ENCODE measurements at regions of chr5 and their contacts with region 1.

Region 1: DNA sequence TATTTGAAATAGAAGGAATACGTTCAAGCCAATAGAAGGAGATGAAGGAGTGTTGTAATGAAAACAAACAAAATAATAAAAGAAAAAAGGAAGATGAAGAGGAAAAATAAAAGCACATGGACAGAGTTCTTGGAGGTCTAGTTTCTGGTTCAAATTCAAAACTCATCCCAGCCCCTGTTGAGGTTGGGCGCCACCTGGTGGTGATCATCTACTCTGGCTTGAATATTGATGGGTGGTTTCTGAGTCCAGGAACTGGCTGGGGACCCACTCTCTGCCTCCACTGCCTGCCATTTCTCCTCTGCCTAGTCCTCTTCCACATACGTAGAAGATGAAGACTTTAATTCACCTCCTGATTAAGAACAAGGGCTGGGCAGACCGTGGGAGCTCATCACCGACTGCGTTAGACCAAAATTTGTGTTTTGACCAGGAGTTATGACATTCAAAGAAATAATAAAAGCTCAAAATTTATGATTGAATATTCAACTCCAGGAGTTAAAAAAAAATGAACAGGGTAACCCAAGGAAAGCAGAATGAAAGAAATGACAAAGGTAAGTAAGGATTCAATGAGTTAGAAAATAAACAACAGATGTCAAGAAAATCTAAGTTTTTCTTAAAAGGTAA is 99.0 kb upstream of the SLC1A3 start:
- DNase-seq: peak; percentile 69
- ATAC-seq: peak; percentile 51
- H3K4me3 ChIP-seq: no peak overlapping the region
- H3K4me3 Mint-ChIP-seq: no peak overlapping the region
- H3K27ac ChIP-seq: no peak overlapping the region
- H3K27ac Mint-ChIP-seq: no peak overlapping the region
- H3K4me1 ChIP-seq: no peaks in the 10 kb centered on the region
- H3K4me1 Mint-ChIP-seq: no peaks in the 10 kb centered on the region
- H3K27me3 ChIP-seq: peaks cover 0 to 2% (median 0%) of the 10 kb centered on the region in 4 experiments
- H3K27me3 Mint-ChIP-seq: peaks cover 25% of the 10 kb centered on the region
- CTCF ChIP-seq: peak; percentile 87

Region 2: GRCh38 chr5:36079200-36079761 is 428.2 kb before region 1 on chr5:
- CTCF ChIA-PET with region 1: interaction called, 13 read pairs
- POLR2A ChIA-PET with region 1: no interaction called
- intact Hi-C with region 1: no loop called
- DNase-seq: peak; percentile 43
- ATAC-seq: peak; percentile 63
- H3K4me3 ChIP-seq: no peak overlapping the region
- H3K4me3 Mint-ChIP-seq: no peak overlapping the region
- H3K27ac ChIP-seq: no peak overlapping the region
- H3K27ac Mint-ChIP-seq: no peak overlapping the region
- H3K4me1 ChIP-seq: no peaks in the 10 kb centered on the region
- H3K4me1 Mint-ChIP-seq: no peaks in the 10 kb centered on the region
- H3K27me3 ChIP-seq: peaks cover 0 to 2% (median 0%) of the 10 kb centered on the region in 4 experiments
- H3K27me3 Mint-ChIP-seq: peaks cover 26% of the 10 kb centered on the region
- CTCF ChIP-seq: peak; percentile 75

Region 3: GRCh38 chr5:36177715-36178523 is 329.5 kb before region 1 on chr5:
- CTCF ChIA-PET with region 1: interaction called, 11 read pairs
- POLR2A ChIA-PET with region 1: no interaction called
- intact Hi-C with region 1: loop called (anchors 2 kb)
- DNase-seq: peak; percentile 11
- ATAC-seq: no peak
- H3K4me3 ChIP-seq: no peak overlapping the region
- H3K4me3 Mint-ChIP-seq: no peak overlapping the region
- H3K27ac ChIP-seq: no peak overlapping the region
- H3K27ac Mint-ChIP-seq: no peak overlapping the region
- H3K4me1 ChIP-seq: no peaks in the 10 kb centered on the region
- H3K4me1 Mint-ChIP-seq: peaks cover 2% of the 10 kb centered on the region
- H3K27me3 ChIP-seq: no peaks in the 10 kb centered on the region
- H3K27me3 Mint-ChIP-seq: no peaks in the 10 kb centered on the region
- CTCF ChIP-seq: peak; percentile 22

Region 4: DNA sequence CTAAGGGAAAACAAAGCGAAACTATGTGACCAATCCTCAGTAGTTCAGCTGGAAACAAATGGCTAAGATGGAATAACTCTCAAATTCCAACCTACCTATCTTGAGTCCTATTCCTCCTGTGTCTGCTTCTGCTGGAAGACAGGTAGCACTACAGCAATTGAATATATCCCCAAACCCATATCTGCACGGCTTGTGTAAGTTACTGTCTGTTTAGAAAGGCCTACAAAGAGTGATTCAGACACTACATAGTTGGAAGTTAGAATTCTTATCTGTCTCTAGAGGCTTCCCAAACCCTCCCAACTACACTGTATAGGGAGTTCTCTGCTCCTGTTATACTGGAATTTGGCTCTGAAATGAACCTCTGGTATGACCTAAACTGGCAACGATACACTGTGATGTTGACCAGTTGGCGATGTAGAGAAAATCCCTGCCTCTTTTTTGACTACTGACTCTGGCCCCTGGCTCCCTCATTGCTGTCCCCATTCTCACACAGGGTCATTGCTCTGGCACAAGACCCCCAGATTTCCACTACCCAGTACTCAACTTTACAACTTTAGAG is 243.2 kb before region 1 on chr5:
- CTCF ChIA-PET with region 1: interaction called, 37 read pairs
- POLR2A ChIA-PET with region 1: no interaction called
- intact Hi-C with region 1: loop called (anchors 1 kb)
- DNase-seq: no peak
- ATAC-seq: no peak
- H3K4me3 ChIP-seq: no peak overlapping the region
- H3K4me3 Mint-ChIP-seq: no peak overlapping the region
- H3K27ac ChIP-seq: no peak overlapping the region
- H3K27ac Mint-ChIP-seq: no peak overlapping the region
- H3K4me1 ChIP-seq: no peaks in the 10 kb centered on the region
- H3K4me1 Mint-ChIP-seq: no peaks in the 10 kb centered on the region
- H3K27me3 ChIP-seq: peaks cover 0 to 5% (median 0%) of the 10 kb centered on the region in 4 experiments
- H3K27me3 Mint-ChIP-seq: peaks cover 10% of the 10 kb centered on the region
- CTCF ChIP-seq: no peak

Region 5: GRCh38 chr5:36414869-36415282 is 92.6 kb before region 1 on chr5:
- CTCF ChIA-PET with region 1: interaction called, 16 read pairs
- POLR2A ChIA-PET with region 1: no interaction called
- intact Hi-C with region 1: loop called (anchors 2 kb)
- DNase-seq: no peak
- ATAC-seq: no peak
- H3K4me3 ChIP-seq: no peak overlapping the region
- H3K4me3 Mint-ChIP-seq: no peak overlapping the region
- H3K27ac ChIP-seq: no peak overlapping the region
- H3K27ac Mint-ChIP-seq: no peak overlapping the region
- H3K4me1 ChIP-seq: no peaks in the 10 kb centered on the region
- H3K4me1 Mint-ChIP-seq: peaks cover 7% of the 10 kb centered on the region
- H3K27me3 ChIP-seq: no peaks in the 10 kb centered on the region
- H3K27me3 Mint-ChIP-seq: peaks cover 4% of the 10 kb centered on the region
- CTCF ChIP-seq: no peak

Measured in B cell (primary cell).